ENCODE measurements at regions of chr11 and their contacts with region 1.

Region 1: DNA sequence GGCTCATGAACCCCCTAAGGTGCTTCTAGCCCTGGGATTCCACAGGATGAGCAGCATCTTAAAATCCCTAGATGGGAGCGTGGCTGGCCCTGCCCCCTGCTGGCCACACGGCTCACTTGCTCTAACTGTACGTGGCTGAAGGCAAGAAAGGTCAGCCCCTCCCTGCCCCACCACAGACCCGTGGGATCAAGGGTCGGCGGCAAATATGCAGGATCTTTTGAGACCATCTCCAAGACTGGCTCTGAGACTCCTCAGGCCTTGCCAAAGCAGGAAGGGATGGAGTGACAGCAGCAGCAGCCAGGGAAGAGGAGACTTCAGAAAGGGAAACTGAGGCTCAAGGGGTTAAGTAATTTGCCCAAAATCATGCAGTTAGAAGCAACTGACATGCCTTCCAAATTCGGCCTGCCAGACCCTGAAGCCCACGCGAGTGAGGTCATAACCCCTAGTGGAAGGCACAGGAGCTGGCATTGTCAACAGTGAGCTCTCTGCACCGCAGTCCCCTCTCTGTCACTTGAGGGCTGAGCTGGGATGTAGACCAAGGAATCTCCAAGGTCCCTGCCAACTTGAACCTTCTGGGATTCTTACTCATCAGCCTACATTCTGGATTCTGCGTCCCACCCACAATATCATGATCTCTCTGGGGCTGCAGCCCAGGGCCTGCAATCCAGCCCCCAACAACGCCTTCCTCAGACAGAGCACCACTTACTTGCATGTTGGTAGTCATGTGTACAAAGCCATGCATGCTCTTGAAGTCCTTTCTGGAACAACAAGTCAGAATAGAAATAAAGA is 31.4 kb downstream of the CREB3L1 start:
- DNase-seq: peak; percentile 86
- ATAC-seq: peak; percentile 86
- H3K4me3 ChIP-seq: no peak overlapping the region
- H3K27ac ChIP-seq: no peak overlapping the region
- H3K4me1 ChIP-seq: no peaks in the 10 kb centered on the region
- H3K27me3 ChIP-seq: no peaks in the 10 kb centered on the region
- CTCF ChIP-seq: peak; percentile 89

Region 2: GRCh38 chr11:45859661-45860140 is 449.1 kb before region 1 on chr11:
- intact Hi-C with region 1: no loop called
- DNase-seq: peak; percentile 95
- ATAC-seq: peak; percentile 84
- H3K4me3 ChIP-seq: no peak overlapping the region
- H3K27ac ChIP-seq: peak overlapping the region; percentile 82
- H3K4me1 ChIP-seq: peaks cover 59% of the 10 kb centered on the region
- H3K27me3 ChIP-seq: no peaks in the 10 kb centered on the region
- CTCF ChIP-seq: no peak

Region 3: GRCh38 chr11:46121724-46122477 is 186.9 kb before region 1 on chr11:
- intact Hi-C with region 1: no loop called
- DNase-seq: peak; percentile 89
- ATAC-seq: peak; percentile 74
- H3K4me3 ChIP-seq: peak overlapping the region; percentile 73
- H3K27ac ChIP-seq: peak overlapping the region; percentile 82
- H3K4me1 ChIP-seq: peaks cover 25% of the 10 kb centered on the region
- H3K27me3 ChIP-seq: no peaks in the 10 kb centered on the region
- CTCF ChIP-seq: no peak

Region 4: DNA sequence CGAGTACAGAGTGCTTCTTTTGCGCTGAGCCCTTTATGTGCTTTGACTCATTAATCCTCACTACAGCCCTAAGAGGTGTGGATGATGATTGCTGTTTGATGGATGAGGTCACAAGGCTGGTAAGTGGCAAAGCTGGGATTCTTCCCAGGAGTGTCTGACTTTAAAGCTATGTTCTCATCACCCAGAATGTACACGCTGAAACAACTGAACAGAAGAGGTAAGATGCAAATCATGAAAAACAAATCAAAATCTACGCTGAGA is 69.1 kb before region 1 on chr11:
- intact Hi-C with region 1: loop called (anchors 2 kb)
- DNase-seq: no peak
- ATAC-seq: no peak
- H3K4me3 ChIP-seq: no peak overlapping the region
- H3K27ac ChIP-seq: no peak overlapping the region
- H3K4me1 ChIP-seq: peaks cover 42% of the 10 kb centered on the region
- H3K27me3 ChIP-seq: no peaks in the 10 kb centered on the region
- CTCF ChIP-seq: no peak